Activated B cell treated with CpG ODN at 0.5 μM for 24 hours (primary cell): ENCODE measurements at regions of chr22 and their contacts with region 1.

Region 1: DNA sequence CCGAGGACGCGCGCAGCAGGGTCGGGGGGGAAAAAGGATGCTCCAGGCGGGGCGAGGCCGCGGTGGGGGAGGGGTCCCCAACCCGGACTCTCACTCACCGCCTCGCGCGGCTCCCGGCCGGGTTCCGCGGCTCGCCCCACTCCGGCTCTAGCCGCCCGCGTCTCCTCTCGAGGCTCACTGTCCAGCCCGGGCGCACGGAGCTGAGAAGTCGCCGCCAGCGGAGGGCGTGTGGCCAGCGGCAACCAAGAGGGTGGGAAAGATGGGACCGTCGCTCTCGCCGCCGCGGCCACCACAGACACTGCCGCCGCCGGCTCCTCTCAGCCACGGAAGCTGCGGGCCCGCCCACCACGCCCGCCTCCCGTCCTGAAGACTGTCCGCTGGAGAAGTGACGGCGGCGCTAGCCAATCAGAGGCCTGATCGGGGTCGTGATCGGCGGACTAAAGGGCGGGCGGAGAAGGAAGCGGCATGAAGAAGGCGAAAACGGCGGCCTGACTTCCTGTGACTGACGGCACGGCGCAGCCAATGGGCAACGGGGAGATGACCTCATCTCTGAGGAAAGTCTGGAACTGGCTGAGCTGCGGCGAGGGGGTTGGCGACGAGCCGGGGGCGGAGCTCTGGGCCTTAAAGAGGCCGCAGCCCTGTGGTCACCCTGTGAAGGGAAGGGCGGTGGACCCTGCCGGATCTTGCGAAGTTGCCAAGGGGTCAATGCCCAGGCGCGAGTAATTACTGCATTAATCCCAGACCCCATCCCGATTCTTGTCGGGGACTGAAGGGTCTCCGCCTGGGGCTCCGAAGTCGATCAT is at the start of gene MRTFA:
- DNase-seq: peak; percentile 95
- ATAC-seq: peak; percentile 93
- H3K4me3 Mint-ChIP-seq: peak within 1 kb of the TSS; percentile 98
- H3K27ac Mint-ChIP-seq: peak within 1 kb of the TSS; percentile 95
- H3K4me1 Mint-ChIP-seq: peaks cover 45% of the 10 kb centered on the region
- H3K27me3 Mint-ChIP-seq: no peaks in the 10 kb centered on the region
- CTCF ChIP-seq: no peak
- total RNA-seq, gene MRTFA: 99.4 and 115 TPM in 2 replicates

Region 2: GRCh38 chr22:40376149-40376548 is 260.4 kb before region 1 on chr22:
- CTCF ChIA-PET with region 1: no interaction called
- POLR2A ChIA-PET with region 1: no interaction called
- intact Hi-C with region 1: loop called (anchors 5 kb)
- DNase-seq: no peak
- ATAC-seq: peak; percentile 75
- H3K4me3 Mint-ChIP-seq: peak overlapping the region; percentile 57
- H3K27ac Mint-ChIP-seq: peak overlapping the region; percentile 75
- H3K4me1 Mint-ChIP-seq: peaks cover 71% of the 10 kb centered on the region
- H3K27me3 Mint-ChIP-seq: no peaks in the 10 kb centered on the region
- CTCF ChIP-seq: no peak

Region 3: DNA sequence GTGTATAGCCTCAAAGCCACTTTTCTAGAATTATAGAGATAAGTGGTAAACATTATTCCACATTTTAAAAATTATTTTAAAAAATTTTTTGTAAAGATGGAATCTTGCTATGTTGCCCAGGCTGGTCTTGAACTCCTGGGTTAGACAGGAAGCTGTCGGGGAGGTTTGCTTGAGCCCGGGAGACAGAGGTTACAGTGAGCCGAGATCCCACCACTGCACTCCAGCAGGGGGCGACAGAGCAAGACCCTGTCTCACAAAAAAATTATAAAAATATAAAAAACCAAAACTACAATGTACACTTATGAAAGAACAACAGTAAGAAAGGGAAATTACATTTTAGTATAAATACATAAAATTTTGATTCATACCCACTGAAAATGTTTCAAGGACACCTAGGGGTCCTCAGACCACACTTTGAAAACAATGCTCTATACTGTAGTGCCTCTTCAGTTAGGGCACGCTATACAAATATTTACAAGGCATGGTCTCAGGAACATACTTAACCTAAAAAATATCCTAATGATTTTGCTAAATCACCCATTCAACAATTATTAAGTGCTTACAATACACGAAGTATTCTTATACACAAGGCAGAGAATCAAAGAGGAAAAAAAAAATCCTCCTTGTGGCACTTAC is 111.2 kb before region 1 on chr22:
- CTCF ChIA-PET with region 1: interaction called, 9 read pairs
- POLR2A ChIA-PET with region 1: interaction called, 18 read pairs
- intact Hi-C with region 1: no loop called
- DNase-seq: peak; percentile 50
- ATAC-seq: peak; percentile 63
- H3K4me3 Mint-ChIP-seq: no peak overlapping the region
- H3K27ac Mint-ChIP-seq: no peak overlapping the region
- H3K4me1 Mint-ChIP-seq: peaks cover 48% of the 10 kb centered on the region
- H3K27me3 Mint-ChIP-seq: no peaks in the 10 kb centered on the region
- CTCF ChIP-seq: peak; percentile 39

Region 4: GRCh38 chr22:40597526-40598430 is 38.8 kb before region 1 on chr22:
- CTCF ChIA-PET with region 1: interaction called, 4 read pairs
- POLR2A ChIA-PET with region 1: interaction called, 41 read pairs
- intact Hi-C with region 1: loop called (anchors 2 kb)
- DNase-seq: no peak
- ATAC-seq: no peak
- H3K4me3 Mint-ChIP-seq: peak overlapping the region; percentile 29
- H3K27ac Mint-ChIP-seq: peak overlapping the region; percentile 96
- H3K4me1 Mint-ChIP-seq: peaks cover 66% of the 10 kb centered on the region
- H3K27me3 Mint-ChIP-seq: no peaks in the 10 kb centered on the region
- CTCF ChIP-seq: no peak

Region 5: GRCh38 chr22:40856513-40857308 is 220.1 kb after region 1 on chr22 and contains the starts of genes ST13 and XPNPEP3:
- CTCF ChIA-PET with region 1: no interaction called
- POLR2A ChIA-PET with region 1: interaction called, 7 read pairs
- intact Hi-C with region 1: loop called (anchors 2 kb)
- DNase-seq: peak; percentile 96
- ATAC-seq: peak; percentile 90
- H3K4me3 Mint-ChIP-seq: peak within 1 kb of the TSS; percentile 98
- H3K27ac Mint-ChIP-seq: peak within 1 kb of the TSS; percentile 100
- H3K4me1 Mint-ChIP-seq: peaks cover 47% of the 10 kb centered on the region
- H3K27me3 Mint-ChIP-seq: no peaks in the 10 kb centered on the region
- CTCF ChIP-seq: no peak
- total RNA-seq, gene ST13: 183 and 221 TPM in 2 replicates
- total RNA-seq, gene XPNPEP3: 20.3 and 20.8 TPM in 2 replicates

Region 6: DNA sequence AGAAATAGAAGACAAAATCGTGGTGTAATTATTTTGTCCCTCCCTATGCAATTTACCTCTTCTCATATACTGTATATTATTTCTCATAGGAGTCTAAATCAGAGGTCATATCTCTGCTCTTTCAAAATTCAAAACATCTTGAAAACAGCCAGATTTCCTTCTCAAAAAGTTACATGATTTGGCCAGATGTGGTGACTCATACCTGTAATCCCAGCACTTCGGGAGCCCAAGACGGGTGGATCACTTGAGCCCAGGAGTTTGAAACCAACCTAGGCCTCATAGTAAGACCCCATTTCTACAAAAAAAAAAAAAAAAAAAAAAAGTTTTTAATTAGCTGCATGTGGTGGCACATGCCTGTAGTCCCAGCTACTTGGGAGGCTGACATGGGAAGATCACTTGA is 254.3 kb after region 1 on chr22:
- CTCF ChIA-PET with region 1: no interaction called
- POLR2A ChIA-PET with region 1: no interaction called
- intact Hi-C with region 1: no loop called
- DNase-seq: no peak
- ATAC-seq: no peak
- H3K4me3 Mint-ChIP-seq: no peak overlapping the region
- H3K27ac Mint-ChIP-seq: no peak overlapping the region
- H3K4me1 Mint-ChIP-seq: no peaks in the 10 kb centered on the region
- H3K27me3 Mint-ChIP-seq: no peaks in the 10 kb centered on the region
- CTCF ChIP-seq: no peak